Activated CD4-positive, alpha-beta memory T cell treated with anti-CD3 and anti-CD28 coated beads, Interleukin-2, amount 10 ng/mL, durations not matched to agents 7 days and 5 days (primary cell): ENCODE measurements at regions of chr17 and their contacts with region 1.

Region 1: GRCh38 chr17:82881900-82882714 is 42.3 kb upstream of the ZNF750 start:
- DNase-seq: no peak
- H3K4me3 Mint-ChIP-seq: peak overlapping the region; percentile 72
- H3K27ac Mint-ChIP-seq: peak overlapping the region; percentile 93
- H3K4me1 Mint-ChIP-seq: peaks cover 81% of the 10 kb centered on the region
- H3K27me3 Mint-ChIP-seq: no peaks in the 10 kb centered on the region

Region 2: DNA sequence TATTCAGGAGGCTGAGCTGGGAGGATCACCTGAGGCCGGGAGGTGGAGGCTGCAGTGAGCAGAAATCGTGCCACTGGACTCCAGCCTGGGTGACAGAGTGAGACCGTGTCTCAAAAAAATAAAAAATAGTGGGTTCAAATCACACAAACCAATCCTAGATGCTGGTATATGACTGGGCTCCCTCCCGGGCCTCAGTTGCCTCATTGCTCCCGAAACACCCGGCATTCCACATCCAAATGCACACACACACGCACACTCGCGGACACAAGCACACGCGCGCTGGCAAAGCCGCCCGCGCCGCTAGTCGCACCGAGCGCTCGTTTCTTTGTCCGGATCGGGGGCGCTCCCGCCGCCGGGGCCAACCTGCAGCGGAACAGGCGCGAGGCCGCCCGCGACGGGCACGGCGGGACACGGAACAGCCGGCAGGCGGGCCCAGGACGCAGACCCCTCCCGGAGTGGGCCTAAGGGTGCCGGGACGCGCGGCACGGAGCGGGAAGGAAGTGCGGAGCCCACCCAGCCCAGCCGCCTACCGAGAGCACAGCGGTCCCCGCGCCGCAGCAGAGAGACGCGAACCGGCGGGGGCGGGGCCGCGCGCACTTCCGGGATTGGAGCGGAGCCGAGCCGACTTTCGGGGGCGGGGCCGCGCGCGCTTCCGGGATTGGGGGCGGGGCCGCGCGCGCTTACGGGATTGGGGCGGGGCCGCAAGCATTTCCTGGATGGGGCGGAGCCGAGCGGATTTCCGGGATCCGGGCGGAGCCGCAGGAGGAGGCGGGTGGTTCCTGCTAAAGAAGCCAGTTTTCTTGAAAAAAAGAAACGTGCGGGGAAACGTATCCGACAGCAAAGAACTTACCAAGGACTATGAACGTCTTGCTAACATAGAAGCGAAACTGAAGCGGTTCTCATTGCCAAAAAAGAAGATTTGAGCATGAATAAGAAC is 431.7 kb before region 1 on chr17 and contains the start of gene CYBC1:
- CTCF ChIA-PET with region 1: no interaction called
- POLR2A ChIA-PET with region 1: no interaction called
- DNase-seq: peak; percentile 96
- H3K4me3 Mint-ChIP-seq: peak within 1 kb of the TSS; percentile 96
- H3K27ac Mint-ChIP-seq: peak within 1 kb of the TSS; percentile 99
- H3K4me1 Mint-ChIP-seq: peaks cover 49% of the 10 kb centered on the region
- H3K27me3 Mint-ChIP-seq: no peaks in the 10 kb centered on the region
- total RNA-seq, gene CYBC1: 308 to 313 TPM

Region 3: DNA sequence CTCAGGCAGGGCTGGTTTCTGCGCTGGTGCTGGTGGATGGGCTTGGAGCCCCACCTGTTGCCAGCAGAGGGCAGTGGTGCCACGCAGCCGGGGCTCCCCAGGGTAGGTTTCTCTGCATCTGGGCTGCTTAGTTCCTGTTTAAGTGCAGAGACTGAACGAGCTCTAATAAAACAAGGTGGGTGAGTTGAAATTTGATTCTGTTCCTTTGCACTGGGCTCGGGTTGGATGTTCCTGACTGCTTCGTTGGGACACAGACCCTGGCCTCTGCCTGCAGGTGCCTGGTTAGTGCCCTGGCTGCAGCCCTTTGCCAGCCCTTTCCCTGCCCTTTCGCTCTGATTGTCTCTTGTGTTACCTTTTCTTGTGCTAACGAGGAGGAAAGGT is 100.2 kb before region 1 on chr17:
- CTCF ChIA-PET with region 1: interaction called, 10 read pairs
- POLR2A ChIA-PET with region 1: no interaction called
- DNase-seq: peak; percentile 89
- H3K4me3 Mint-ChIP-seq: no peak overlapping the region
- H3K27ac Mint-ChIP-seq: peak overlapping the region; percentile 12
- H3K4me1 Mint-ChIP-seq: peaks cover 12% of the 10 kb centered on the region
- H3K27me3 Mint-ChIP-seq: no peaks in the 10 kb centered on the region

Region 4: GRCh38 chr17:82892899-82893565 is 10.9 kb after region 1 on chr17:
- CTCF ChIA-PET with region 1: interaction called, 3 read pairs
- POLR2A ChIA-PET with region 1: interaction called, 16 read pairs
- DNase-seq: peak; percentile 83
- H3K4me3 Mint-ChIP-seq: peak overlapping the region; percentile 57
- H3K27ac Mint-ChIP-seq: peak overlapping the region; percentile 68
- H3K4me1 Mint-ChIP-seq: peaks cover 42% of the 10 kb centered on the region
- H3K27me3 Mint-ChIP-seq: no peaks in the 10 kb centered on the region